ENCODE measurements at regions of chrX and their contacts with region 1.

Region 1: GRCh38 chrX:108199691-108200090 is 108.1 kb downstream of the ATG4A start:
- DNase-seq: peak; percentile 16 to 34 (median 25)
- ATAC-seq: 0 out of 3 replicates have a peak, but pooled peaks have one; percentile 52
- H3K4me3 ChIP-seq: no peak overlapping the region
- H3K27ac ChIP-seq: no peak overlapping the region
- H3K4me1 ChIP-seq: no peaks in the 10 kb centered on the region
- H3K27me3 ChIP-seq: no peaks in the 10 kb centered on the region
- CTCF ChIP-seq: peak; percentile 51 to 71 (median 61)
- EP300 ChIP-seq: no peak
- POLR2A ChIP-seq: no peak
- RAD21 ChIP-seq: peak; percentile 29 to 58; a peak in 3 of 4 replicates

Region 2: DNA sequence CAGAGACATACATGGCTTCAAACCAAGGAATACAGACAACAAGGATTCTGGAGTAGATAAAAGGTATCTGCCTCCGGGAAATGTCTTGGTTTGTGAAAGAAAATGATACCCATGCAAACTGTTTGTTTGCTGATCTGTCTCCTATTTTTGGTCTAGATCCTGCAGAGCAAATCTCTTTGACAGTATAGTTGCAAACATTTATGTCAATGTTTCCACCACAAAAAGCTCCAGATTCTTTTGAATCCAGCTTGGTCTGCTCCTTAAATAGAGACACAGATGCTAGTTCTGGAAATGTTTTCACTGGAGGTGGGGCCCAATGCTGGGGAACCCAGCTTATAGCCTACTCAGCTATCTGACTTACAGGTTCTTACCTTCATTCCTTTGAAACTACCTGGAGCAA is 11.6 kb after region 1 on chrX:
- CTCF ChIA-PET with region 1: no interaction called
- POLR2A ChIA-PET with region 1: no interaction called
- in situ Hi-C with region 1: no loop called
- intact Hi-C with region 1: loop called (anchors 1 kb)
- DNase-seq: no peak
- ATAC-seq: no peak
- H3K4me3 ChIP-seq: no peak overlapping the region
- H3K27ac ChIP-seq: no peak overlapping the region
- H3K4me1 ChIP-seq: no peaks in the 10 kb centered on the region
- H3K27me3 ChIP-seq: no peaks in the 10 kb centered on the region
- CTCF ChIP-seq: no peak
- EP300 ChIP-seq: no peak
- POLR2A ChIP-seq: no peak
- RAD21 ChIP-seq: no peak

Region 3: GRCh38 chrX:108304210-108304609 is 104.5 kb after region 1 on chrX:
- CTCF ChIA-PET with region 1: interaction called, 3 read pairs
- POLR2A ChIA-PET with region 1: no interaction called
- in situ Hi-C with region 1: no loop called
- intact Hi-C with region 1: loop called (anchors 1 kb)
- DNase-seq: peak; percentile 13 to 21 (median 16)
- ATAC-seq: peak; percentile 63; the same call in 2 of the 3 replicates
- H3K4me3 ChIP-seq: no peak overlapping the region
- H3K27ac ChIP-seq: no peak overlapping the region
- H3K4me1 ChIP-seq: no peaks in the 10 kb centered on the region
- H3K27me3 ChIP-seq: no peaks in the 10 kb centered on the region
- CTCF ChIP-seq: peak; percentile 29 to 52 (median 47); a peak in 5 of 6 replicates
- EP300 ChIP-seq: no peak
- POLR2A ChIP-seq: no peak
- RAD21 ChIP-seq: peak in 1 of 2 experiments; percentile 53; a peak in 2 of 4 replicates

Region 4: DNA sequence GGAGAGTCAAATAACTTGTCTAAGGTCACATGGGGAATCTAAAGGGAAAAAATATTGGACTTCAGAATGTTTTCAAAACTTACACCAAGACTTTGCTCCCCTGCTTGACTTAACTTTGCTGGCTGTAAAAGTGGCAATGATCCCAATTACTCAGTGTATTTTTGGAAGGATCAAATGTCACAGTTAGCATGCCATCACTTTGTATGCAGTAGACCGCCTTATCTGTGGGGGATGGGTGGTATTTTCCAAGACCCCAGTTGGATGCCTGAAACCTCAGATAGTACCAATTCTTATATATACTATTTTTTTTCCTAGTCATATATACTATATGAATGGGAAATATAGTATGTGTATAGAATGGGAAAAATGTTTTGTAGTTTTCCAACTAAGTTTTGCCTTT is 185.1 kb after region 1 on chrX:
- CTCF ChIA-PET with region 1: no interaction called
- POLR2A ChIA-PET with region 1: no interaction called
- in situ Hi-C with region 1: no loop called
- intact Hi-C with region 1: no loop called
- DNase-seq: no peak
- ATAC-seq: no peak
- H3K4me3 ChIP-seq: no peak overlapping the region
- H3K27ac ChIP-seq: no peak overlapping the region
- H3K4me1 ChIP-seq: no peaks in the 10 kb centered on the region
- H3K27me3 ChIP-seq: no peaks in the 10 kb centered on the region
- CTCF ChIP-seq: no peak
- EP300 ChIP-seq: no peak
- POLR2A ChIP-seq: no peak
- RAD21 ChIP-seq: no peak

Region 5: DNA sequence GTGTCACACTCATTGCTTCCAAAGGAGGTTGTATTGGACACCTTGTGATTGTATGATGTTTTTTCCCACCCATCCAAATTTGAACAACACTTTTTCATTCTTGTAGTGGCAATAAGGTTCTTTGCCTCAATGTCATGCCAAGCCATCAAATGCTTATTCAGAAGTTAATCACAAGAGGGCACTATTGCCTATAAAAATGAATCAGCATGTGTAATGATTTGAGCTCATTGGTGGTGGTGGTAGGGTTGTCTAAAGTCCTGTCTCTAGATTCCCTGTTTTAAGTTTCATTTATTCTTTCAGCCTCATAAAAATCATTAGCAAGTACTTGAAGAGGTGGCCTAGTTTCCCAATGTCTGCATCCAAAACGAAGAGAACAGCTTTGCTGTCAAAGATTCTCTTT is 499.7 kb after region 1 on chrX:
- CTCF ChIA-PET with region 1: no interaction called
- POLR2A ChIA-PET with region 1: no interaction called
- in situ Hi-C with region 1: loop called (anchors 25 kb)
- intact Hi-C with region 1: no loop called
- DNase-seq: peak in 3 of 4 experiments; percentile 5 to 8 (median 5)
- ATAC-seq: peak; percentile 51; the same call in 1 of the 3 replicates
- H3K4me3 ChIP-seq: no peak overlapping the region
- H3K27ac ChIP-seq: no peak overlapping the region
- H3K4me1 ChIP-seq: no peaks in the 10 kb centered on the region
- H3K27me3 ChIP-seq: no peaks in the 10 kb centered on the region
- CTCF ChIP-seq: peak; percentile 1 to 41 (median 22); a peak in 3 of 6 replicates
- EP300 ChIP-seq: no peak
- POLR2A ChIP-seq: no peak
- RAD21 ChIP-seq: peak; percentile 32 to 48; a peak in 3 of 4 replicates